ENCODE measurements at regions of chr19 and their contacts with region 1.

Region 1: GRCh38 chr19:15318241-15318691 is 14.1 kb downstream of the BRD4 start:
- DNase-seq: no peak
- ATAC-seq: peak; percentile 82
- H3K4me3 Mint-ChIP-seq: peak overlapping the region; percentile 69
- H3K27ac Mint-ChIP-seq: peak overlapping the region; percentile 82
- H3K4me1 Mint-ChIP-seq: peaks cover 87% of the 10 kb centered on the region
- H3K27me3 Mint-ChIP-seq: no peaks in the 10 kb centered on the region
- CTCF ChIP-seq: no peak

Region 2: GRCh38 chr19:15239337-15239949 is 78.8 kb before region 1 on chr19:
- CTCF ChIA-PET with region 1: no interaction called
- POLR2A ChIA-PET with region 1: interaction called, 14 read pairs
- intact Hi-C with region 1: no loop called
- DNase-seq: no peak
- ATAC-seq: no peak
- H3K4me3 Mint-ChIP-seq: no peak overlapping the region
- H3K27ac Mint-ChIP-seq: no peak overlapping the region
- H3K4me1 Mint-ChIP-seq: peaks cover 4% of the 10 kb centered on the region
- H3K27me3 Mint-ChIP-seq: no peaks in the 10 kb centered on the region
- CTCF ChIP-seq: no peak

Region 3: GRCh38 chr19:15288146-15288963 is 29.9 kb before region 1 on chr19:
- CTCF ChIA-PET with region 1: interaction called, 3 read pairs
- POLR2A ChIA-PET with region 1: interaction called, 4 read pairs
- intact Hi-C with region 1: loop called (anchors 2 kb)
- DNase-seq: peak; percentile 48
- ATAC-seq: peak; percentile 75
- H3K4me3 Mint-ChIP-seq: peak overlapping the region; percentile 72
- H3K27ac Mint-ChIP-seq: peak overlapping the region; percentile 80
- H3K4me1 Mint-ChIP-seq: peaks cover 96% of the 10 kb centered on the region
- H3K27me3 Mint-ChIP-seq: no peaks in the 10 kb centered on the region
- CTCF ChIP-seq: no peak

Region 4: DNA sequence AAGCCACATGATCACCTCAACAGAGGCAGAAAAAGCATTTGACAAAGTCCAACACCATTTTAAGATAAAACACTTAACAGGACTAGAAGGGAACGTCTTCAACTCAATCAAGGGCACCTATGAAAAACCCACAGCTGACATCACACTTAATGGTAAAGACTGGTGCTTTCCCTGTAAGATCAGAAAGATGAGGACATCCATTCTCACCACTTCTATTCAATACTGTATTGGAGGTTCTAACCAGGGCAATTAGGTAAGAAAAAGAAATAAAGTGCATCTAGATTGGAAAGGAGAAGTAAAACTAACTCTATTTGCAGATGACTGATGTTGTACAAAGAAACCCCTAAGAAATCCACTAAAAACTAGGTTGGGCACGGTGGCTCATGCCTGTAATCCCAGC is 72.5 kb after region 1 on chr19:
- CTCF ChIA-PET with region 1: no interaction called
- POLR2A ChIA-PET with region 1: no interaction called
- intact Hi-C with region 1: no loop called
- DNase-seq: no peak
- ATAC-seq: no peak
- H3K4me3 Mint-ChIP-seq: no peak overlapping the region
- H3K27ac Mint-ChIP-seq: no peak overlapping the region
- H3K4me1 Mint-ChIP-seq: peaks cover 10% of the 10 kb centered on the region
- H3K27me3 Mint-ChIP-seq: no peaks in the 10 kb centered on the region
- CTCF ChIP-seq: no peak

Region 5: DNA sequence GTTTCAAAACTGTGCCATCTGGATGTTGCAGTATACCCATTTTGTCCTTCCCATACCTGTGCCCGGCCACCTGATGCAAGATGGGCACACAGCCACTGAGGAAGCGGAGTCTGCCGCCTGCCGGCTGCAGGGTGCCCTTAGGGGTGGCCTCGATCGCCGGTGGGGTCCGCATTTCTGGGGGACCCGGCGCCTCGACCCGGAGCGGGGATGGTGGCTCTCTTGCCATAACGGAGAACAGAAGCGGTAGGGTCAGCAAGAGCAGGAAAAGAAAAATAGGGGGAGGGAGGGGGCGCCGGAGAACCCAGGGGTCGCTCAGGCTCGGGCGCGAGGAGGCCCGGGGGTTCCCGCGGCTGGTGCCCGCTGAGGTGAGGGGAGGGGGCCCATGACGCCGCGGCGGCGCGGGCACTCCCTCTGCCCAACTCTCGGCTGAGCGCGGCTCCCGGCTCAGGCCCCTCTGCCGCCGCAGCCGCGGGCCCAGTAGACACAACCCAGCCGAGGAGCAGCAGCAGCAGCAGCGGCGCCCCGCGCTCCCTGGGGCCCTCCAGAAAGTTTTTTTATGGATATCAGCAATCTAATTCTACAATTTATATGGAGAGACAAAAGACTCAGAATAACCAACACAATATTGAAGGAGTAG is 593.5 kb after region 1 on chr19:
- CTCF ChIA-PET with region 1: no interaction called
- POLR2A ChIA-PET with region 1: no interaction called
- intact Hi-C with region 1: no loop called
- DNase-seq: no peak
- ATAC-seq: no peak
- H3K4me3 Mint-ChIP-seq: no peak overlapping the region
- H3K27ac Mint-ChIP-seq: no peak overlapping the region
- H3K4me1 Mint-ChIP-seq: peaks cover 2% of the 10 kb centered on the region
- H3K27me3 Mint-ChIP-seq: peaks cover 41% of the 10 kb centered on the region
- CTCF ChIP-seq: no peak